ENCODE measurements at regions of chr19 and their contacts with region 1.

Region 1: GRCh38 chr19:2983351-2984195 is 6.2 kb downstream of the TLE6 start:
- DNase-seq: no peak
- H3K4me3 ChIP-seq: peak overlapping the region; percentile 34 to 41
- H3K27ac ChIP-seq: peak overlapping the region; percentile 81
- H3K4me1 ChIP-seq: peaks cover 28% of the 10 kb centered on the region
- H3K27me3 ChIP-seq: no peaks in the 10 kb centered on the region
- CTCF ChIP-seq: no peak
- POLR2A ChIP-seq: no peak

Region 2: DNA sequence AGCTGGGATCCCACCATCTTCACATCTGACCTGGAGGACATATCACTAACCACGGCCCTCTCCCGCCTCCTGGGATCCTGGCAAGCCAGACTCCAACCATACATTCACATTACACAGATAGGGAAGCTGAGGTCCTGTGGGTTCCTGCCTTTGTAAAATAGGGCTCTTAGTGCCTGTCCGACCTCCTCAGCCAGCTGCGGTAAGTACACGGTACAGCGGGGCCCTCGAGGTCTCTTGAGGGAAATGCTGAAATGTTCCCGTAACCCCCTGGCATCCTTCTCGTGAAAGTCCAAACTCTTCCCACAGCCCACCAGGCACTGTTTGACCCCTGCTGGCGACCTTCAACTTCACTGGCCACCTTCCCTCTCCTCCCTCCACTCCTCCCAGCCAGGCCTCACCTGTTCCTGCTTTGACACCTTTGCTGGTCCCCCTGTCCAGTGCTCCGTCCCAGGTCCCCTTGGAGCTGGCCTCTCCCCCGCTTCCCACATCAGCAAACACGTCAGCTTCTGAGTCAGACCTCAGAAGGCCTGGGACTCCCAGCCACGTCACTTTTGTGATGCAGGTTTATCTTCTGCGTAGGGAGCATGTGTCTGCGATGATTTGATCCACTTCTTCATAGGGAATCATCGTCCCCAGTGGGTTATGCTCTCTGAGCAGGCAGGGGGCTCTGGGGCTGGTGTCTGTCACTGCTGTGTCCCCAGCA is 272.2 kb before region 1 on chr19:
- intact Hi-C with region 1: no loop called
- DNase-seq: no peak
- H3K4me3 ChIP-seq: no peak overlapping the region
- H3K27ac ChIP-seq: no peak overlapping the region
- H3K4me1 ChIP-seq: no peaks in the 10 kb centered on the region
- H3K27me3 ChIP-seq: no peaks in the 10 kb centered on the region
- CTCF ChIP-seq: no peak
- POLR2A ChIP-seq: no peak

Region 3: DNA sequence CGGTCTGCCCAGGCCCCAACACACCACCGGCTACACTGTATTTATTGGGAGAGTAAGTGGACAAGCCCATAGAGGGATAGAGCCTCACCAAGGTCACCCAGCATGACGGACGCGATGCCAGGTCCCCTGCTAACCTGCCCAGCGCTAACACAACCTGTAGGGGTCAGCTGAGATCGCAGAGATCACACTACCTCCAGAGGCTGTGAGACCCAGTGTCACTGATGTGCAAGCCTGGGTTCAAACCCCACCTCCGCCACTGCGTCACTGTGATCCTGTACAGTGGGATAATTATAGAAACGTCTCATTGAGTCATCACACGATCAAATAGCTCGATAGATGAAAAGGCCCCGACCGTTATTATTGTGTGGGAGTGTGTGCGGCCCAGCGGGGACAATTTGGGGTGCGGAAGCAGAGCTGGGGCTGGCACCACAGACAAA is 56.1 kb after region 1 on chr19:
- intact Hi-C with region 1: loop called (anchors 5 kb)
- DNase-seq: no peak
- H3K4me3 ChIP-seq: no peak overlapping the region
- H3K27ac ChIP-seq: no peak overlapping the region
- H3K4me1 ChIP-seq: peaks cover 34% of the 10 kb centered on the region
- H3K27me3 ChIP-seq: no peaks in the 10 kb centered on the region
- CTCF ChIP-seq: no peak
- POLR2A ChIP-seq: no peak

Measured in vagina (tissue), 2 donors.